ENCODE measurements at regions of chr9 and their contacts with region 1.

Region 1: GRCh38 chr9:134396258-134396742 is 70.0 kb downstream of the RXRA start:
- DNase-seq: peak in 9 of 10 donors; percentile 28 to 57 (median 42)
- ATAC-seq: peak; percentile 18 to 23
- H3K4me3 Mint-ChIP-seq: peak overlapping the region; percentile 71 to 91 (median 82)
- H3K27ac Mint-ChIP-seq: peak overlapping the region; percentile 81 to 97 (median 91)
- H3K4me1 Mint-ChIP-seq: peaks cover 18 to 71% (median 62%) of the 10 kb centered on the region in 4 donors
- H3K27me3 Mint-ChIP-seq: no peaks in the 10 kb centered on the region

Region 2: DNA sequence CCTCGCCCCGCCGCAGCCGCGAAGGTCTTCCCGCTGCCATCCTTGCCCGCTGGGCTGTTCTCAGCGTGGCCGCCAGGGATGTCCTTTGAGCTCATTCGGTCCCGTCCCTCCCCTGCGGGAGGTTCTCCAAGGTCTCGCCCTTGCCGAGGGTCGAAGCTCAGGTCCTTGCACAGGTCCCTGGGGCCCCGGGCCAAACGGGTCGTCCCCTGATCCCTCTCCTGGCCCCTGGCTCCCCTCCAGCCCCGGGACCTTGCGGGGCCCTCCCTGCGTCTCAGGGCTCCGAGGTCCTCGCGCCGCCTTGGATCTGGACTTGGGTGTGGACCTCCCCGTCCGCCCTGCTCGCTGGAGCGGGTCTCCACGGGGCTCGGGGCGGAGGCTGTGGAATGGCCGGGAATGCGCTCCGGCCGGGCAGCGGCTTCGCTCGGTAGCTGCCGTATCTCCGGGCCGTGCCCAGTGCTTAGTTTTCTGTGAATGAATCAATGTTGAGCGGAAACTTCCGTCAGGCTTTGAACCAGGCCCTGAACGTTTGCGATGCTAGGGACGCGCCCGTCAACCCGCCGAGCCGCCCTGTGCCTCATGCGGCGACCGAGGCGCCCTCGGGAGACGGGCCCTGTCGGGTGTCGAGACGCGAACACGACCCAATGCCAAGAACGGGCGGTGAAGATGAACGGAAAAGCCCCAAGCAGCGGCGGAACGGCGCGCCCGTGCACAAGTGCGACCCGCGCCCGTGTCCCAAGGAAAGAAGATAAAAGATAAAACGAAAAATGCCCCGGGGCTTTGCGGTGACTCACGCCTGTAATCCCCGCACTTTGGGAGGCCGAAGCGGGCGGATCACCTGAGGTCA is 232.7 kb before region 1 on chr9:
- POLR2A ChIA-PET with region 1: interaction called, 10 read pairs
- DNase-seq: peak; percentile 56 to 81 (median 66)
- ATAC-seq: peak in 1 of 2 donors; percentile 7
- H3K4me3 Mint-ChIP-seq: peak overlapping the region in 3 of 10 donors; percentile 20 to 38 (median 26)
- H3K27ac Mint-ChIP-seq: peak overlapping the region in 2 of 10 donors; percentile 8 to 44
- H3K4me1 Mint-ChIP-seq: peaks cover 8 to 25% (median 14%) of the 10 kb centered on the region in 4 donors
- H3K27me3 Mint-ChIP-seq: no peaks in the 10 kb centered on the region

Region 3: GRCh38 chr9:134253606-134254198 is 142.6 kb before region 1 on chr9:
- POLR2A ChIA-PET with region 1: no interaction called
- DNase-seq: no peak
- ATAC-seq: no peak
- H3K4me3 Mint-ChIP-seq: no peak overlapping the region
- H3K27ac Mint-ChIP-seq: peak overlapping the region in 4 of 10 donors; percentile 4 to 67 (median 6)
- H3K4me1 Mint-ChIP-seq: peaks cover 0 to 6% (median 0%) of the 10 kb centered on the region in 4 donors
- H3K27me3 Mint-ChIP-seq: peaks cover 0 to 3% (median 0%) of the 10 kb centered on the region in 5 donors

Region 4: GRCh38 chr9:134407123-134407808 is 11.0 kb after region 1 on chr9:
- POLR2A ChIA-PET with region 1: interaction called, 26 read pairs
- DNase-seq: peak; percentile 50 to 86 (median 72)
- ATAC-seq: peak; percentile 80 to 84
- H3K4me3 Mint-ChIP-seq: peak overlapping the region; percentile 54 to 85 (median 74)
- H3K27ac Mint-ChIP-seq: peak overlapping the region in 5 of 10 donors; percentile 31 to 90 (median 68)
- H3K4me1 Mint-ChIP-seq: peaks cover 25 to 49% (median 41%) of the 10 kb centered on the region in 4 donors
- H3K27me3 Mint-ChIP-seq: no peaks in the 10 kb centered on the region